Left cardiac atrium (tissue), 4 donors: ENCODE measurements at regions of chr19 and their contacts with region 1.

Region 1: DNA sequence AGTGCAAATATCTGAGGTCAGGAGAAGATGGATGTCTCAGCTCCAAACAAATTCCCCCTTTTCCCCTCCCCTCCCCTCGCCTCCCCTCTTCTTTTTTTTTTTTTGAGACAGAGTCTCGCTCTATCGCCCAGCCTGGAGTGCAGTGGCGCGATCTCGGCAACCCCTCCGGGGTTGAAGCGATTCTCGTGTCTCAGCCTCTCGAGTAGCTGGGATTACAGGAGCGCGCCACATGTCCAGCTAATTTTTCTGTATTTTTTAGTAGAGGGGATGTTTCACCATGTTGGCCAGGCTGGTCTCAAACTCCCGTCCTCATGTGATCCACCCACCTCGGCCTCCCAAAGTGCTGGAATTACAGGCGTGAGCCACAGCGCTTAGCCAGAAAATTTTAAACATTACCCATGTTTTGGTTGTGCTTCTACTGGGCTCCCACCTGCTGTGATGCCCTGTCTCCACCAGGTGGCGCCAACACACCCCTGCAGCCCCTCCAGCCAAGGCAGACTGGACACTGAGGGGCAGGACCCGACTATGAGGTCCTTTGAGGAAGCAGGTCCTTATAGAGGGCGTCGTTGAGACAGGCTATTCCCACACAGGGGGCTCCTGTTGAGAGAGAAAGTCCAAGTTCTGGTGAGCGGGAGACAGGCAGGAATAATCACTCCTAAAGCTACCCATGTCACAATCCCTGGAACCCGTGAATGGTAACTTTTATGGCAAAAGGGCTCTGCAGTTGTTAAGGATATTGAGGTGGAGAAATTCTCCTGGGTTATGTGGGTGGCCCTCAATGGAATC is 6.3 kb downstream of the ERICH4 start:
- DNase-seq: peak; percentile 82
- ATAC-seq: peak; percentile 91 to 95

Region 2: GRCh38 chr19:41570639-41571112 is 121.4 kb after region 1 on chr19:
- intact Hi-C with region 1: loop called (anchors 2 to 5 kb)
- DNase-seq: peak; percentile 87
- ATAC-seq: peak; percentile 86 to 88